HEK293T (cell line): ENCODE measurements at regions of chr12 and their contacts with region 1.

Region 1: GRCh38 chr12:6752921-6753771 is at the start of gene MLF2:
- DNase-seq: peak; percentile 98

Region 2: DNA sequence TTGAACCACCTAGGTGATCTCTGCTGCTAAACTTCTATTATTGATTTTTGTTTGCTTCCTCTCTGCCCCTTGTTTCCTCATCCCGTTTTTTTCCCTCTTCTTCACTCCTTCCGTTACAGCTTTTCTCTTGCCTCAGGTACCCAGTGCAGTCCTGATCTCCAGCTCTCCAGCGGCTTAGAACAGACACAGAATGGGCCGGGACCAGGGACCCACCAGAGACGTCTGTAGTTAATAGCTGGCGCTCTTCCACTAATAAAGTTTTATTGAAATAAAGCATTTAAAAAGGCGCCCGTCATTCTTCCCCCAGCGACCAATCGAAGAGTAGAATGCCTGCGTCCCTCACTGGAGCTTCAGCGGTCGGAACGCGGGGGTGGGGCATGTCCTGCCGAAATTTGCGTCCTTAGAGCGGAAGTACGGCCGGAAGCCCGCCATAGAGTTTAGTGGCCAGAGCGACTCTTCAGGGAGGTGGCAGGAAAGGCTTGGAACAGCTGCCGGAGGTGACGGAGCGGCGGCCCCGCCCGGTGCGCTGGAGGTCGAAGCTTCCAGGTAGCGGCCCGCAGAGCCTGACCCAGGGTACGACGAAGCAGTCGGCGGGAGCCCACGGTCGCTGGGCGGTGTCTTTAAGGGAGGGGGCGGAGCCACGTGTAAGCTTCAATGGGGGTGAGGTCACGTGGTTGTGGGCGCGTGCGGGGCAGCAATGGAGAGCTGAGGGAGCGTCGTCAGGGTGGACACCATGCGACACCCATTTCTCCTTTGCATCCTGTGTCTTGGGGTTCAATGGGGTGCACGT is 29.3 kb before region 1 on chr12 and contains the start of gene COPS7A:
- CTCF ChIA-PET with region 1: interaction called, 5 read pairs
- POLR2A ChIA-PET with region 1: interaction called, 69 read pairs
- DNase-seq: peak; percentile 95

Region 3: GRCh38 chr12:6773590-6774351 is 20.6 kb after region 1 on chr12:
- CTCF ChIA-PET with region 1: interaction called, 25 read pairs
- POLR2A ChIA-PET with region 1: interaction called, 148 read pairs
- DNase-seq: no peak

Region 4: DNA sequence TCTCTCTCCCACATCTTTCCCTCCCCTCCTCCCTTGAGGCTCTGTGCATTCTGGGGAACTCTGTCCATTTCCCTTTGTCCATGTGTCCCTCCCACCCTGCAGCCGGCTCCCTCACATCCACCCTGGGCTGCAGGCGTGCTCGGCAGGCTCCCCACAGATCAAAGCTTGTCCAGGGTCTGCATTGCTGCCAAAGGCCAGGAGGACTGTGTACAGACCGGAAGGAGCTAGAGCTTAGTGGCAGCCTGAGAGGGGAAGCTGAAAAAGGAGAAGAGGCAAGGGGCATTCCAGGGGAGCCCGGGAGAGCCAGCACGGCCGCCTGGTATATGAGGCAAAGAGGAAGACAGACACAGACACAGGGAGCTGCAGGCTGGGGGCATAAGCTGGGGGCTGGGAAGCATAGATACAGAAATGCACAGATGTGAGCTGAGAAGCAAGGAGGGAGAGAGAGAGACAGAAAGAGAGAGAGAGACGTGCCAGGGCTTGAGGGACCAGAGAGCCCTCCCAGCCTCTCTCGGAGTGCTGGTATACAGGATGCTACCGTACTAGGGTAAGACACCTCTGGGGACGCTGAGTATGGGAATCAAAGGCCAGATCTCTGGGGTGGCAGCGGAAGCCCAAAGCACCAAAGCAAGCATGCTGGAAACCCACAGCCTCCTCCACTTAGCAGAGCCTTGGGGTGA is 39.5 kb after region 1 on chr12:
- CTCF ChIA-PET with region 1: interaction called, 3 read pairs
- POLR2A ChIA-PET with region 1: interaction called, 10 read pairs
- DNase-seq: no peak

Region 5: GRCh38 chr12:6833189-6833890 is 80.2 kb after region 1 on chr12:
- CTCF ChIA-PET with region 1: interaction called, 6 read pairs
- POLR2A ChIA-PET with region 1: interaction called, 49 read pairs
- DNase-seq: no peak

Region 6: GRCh38 chr12:6873094-6874014 is 120.2 kb after region 1 on chr12 and contains the start of gene SPSB2:
- CTCF ChIA-PET with region 1: interaction called, 3 read pairs
- POLR2A ChIA-PET with region 1: interaction called, 15 read pairs
- DNase-seq: peak; percentile 96